Vagina (tissue), 2 donors: ENCODE measurements at regions of chr2 and their contacts with region 1.

Region 1: GRCh38 chr2:23926750-23927571 is at the start of gene ATAD2B:
- DNase-seq: peak in 1 of 2 donors; percentile 91
- H3K4me3 ChIP-seq: peak within 1 kb of the TSS; percentile 79 to 93
- H3K27ac ChIP-seq: peak within 1 kb of the TSS; percentile 99
- H3K4me1 ChIP-seq: peaks cover 38% of the 10 kb centered on the region
- H3K27me3 ChIP-seq: no peaks in the 10 kb centered on the region
- CTCF ChIP-seq: peak; percentile 75 to 88 (median 76)
- POLR2A ChIP-seq: peak in 1 of 2 donors; percentile 66
- total RNA-seq, gene ATAD2B: 38.5 TPM

Region 2: DNA sequence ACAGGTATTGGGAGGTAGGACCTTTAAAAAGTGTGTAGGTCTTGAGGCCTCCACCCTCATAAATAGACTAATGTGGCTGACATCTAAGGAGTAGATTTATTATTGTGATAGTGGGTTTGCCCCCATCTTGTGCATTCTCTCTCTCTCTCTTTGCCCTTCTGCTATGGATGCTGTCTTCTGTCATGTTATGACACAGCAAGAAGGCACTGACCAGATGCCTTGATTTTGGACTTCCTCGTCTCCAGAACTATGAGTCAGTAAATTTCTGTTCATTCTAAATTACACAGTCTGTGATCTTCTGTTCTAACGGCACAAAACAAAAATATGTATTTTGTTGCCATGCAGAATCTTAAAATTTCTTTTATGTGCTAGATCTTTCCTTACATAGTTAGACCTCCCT is 67.0 kb before region 1 on chr2:
- intact Hi-C with region 1: no loop called
- DNase-seq: no peak
- H3K4me3 ChIP-seq: no peak overlapping the region
- H3K27ac ChIP-seq: no peak overlapping the region
- H3K4me1 ChIP-seq: no peaks in the 10 kb centered on the region
- H3K27me3 ChIP-seq: no peaks in the 10 kb centered on the region
- CTCF ChIP-seq: no peak
- POLR2A ChIP-seq: no peak

Region 3: GRCh38 chr2:23993736-23994269 is 66.8 kb after region 1 on chr2:
- intact Hi-C with region 1: no loop called
- DNase-seq: no peak
- H3K4me3 ChIP-seq: no peak overlapping the region
- H3K27ac ChIP-seq: no peak overlapping the region
- H3K4me1 ChIP-seq: no peaks in the 10 kb centered on the region
- H3K27me3 ChIP-seq: no peaks in the 10 kb centered on the region
- CTCF ChIP-seq: no peak
- POLR2A ChIP-seq: no peak

Region 4: GRCh38 chr2:24046930-24047702 is 120.2 kb after region 1 on chr2 and contains the start of gene WDCP:
- intact Hi-C with region 1: loop called (anchors 10 kb)
- DNase-seq: peak in 1 of 2 donors; percentile 99
- H3K4me3 ChIP-seq: peak within 1 kb of the TSS; percentile 58 to 89
- H3K27ac ChIP-seq: peak within 1 kb of the TSS; percentile 42
- H3K4me1 ChIP-seq: peaks cover 35% of the 10 kb centered on the region
- H3K27me3 ChIP-seq: no peaks in the 10 kb centered on the region
- CTCF ChIP-seq: no peak
- POLR2A ChIP-seq: peak; percentile 33 to 48
- total RNA-seq, gene WDCP: 5.2 TPM

Region 5: DNA sequence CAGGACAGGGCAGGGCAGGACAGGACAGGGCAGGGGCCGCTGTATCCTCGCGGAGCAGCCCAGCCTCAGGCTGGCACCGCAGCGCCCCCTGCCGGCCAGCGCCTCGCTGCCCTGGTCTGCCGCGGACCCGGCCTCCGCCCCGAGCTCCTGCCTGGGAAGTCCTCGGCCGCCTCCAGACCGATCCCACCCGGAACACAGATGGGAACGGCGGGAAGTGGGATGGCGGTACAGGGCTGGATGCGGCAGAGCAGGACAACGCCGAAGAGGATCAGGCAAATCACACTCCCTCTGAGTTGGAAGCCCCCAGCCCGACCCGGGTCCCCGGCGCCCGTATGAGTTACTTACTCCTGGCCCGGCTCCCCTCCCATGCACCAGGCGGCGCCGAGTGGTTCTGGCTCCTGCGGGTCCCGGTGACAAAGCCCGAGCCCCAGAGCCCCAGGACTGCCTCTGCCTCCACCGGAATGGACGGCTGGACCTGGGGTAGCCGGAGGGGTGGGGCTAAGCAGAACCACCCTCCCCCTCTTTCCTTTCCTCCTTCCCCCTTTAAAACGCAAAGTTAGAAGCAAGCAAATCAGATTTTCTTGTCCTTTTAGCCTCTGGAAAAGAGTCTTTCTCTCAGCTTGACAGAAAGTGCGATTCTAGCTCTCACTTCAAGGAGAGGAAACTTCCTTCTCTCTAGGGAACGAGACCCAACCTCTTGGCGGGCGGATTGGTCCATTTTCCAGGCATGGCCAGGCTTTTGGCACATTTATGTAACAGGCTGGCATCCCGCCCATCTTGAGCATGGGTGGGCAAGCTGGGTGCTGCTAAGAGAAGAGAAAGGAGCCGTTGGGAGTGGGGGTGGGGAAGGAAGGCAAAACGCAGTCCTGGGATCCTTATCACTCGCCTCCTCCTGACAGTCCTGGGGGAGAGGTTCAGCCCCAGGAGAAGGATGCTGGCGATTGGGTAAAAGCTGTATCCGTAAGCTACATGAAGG is 157.7 kb after region 1 on chr2 and contains the start of gene TP53I3:
- intact Hi-C with region 1: loop called (anchors 2 kb)
- DNase-seq: peak in 1 of 2 donors; percentile 95
- H3K4me3 ChIP-seq: peak within 1 kb of the TSS; percentile 53 to 64
- H3K27ac ChIP-seq: peak within 1 kb of the TSS; percentile 94
- H3K4me1 ChIP-seq: peaks cover 12% of the 10 kb centered on the region
- H3K27me3 ChIP-seq: no peaks in the 10 kb centered on the region
- CTCF ChIP-seq: peak; percentile 86 to 97 (median 97)
- POLR2A ChIP-seq: peak in 1 of 2 donors; percentile 43
- total RNA-seq, gene TP53I3: 31.9 TPM